Upper lobe of right lung (tissue), 1 donor: ENCODE measurements at regions of chr7 and their contacts with region 1.

Region 1: DNA sequence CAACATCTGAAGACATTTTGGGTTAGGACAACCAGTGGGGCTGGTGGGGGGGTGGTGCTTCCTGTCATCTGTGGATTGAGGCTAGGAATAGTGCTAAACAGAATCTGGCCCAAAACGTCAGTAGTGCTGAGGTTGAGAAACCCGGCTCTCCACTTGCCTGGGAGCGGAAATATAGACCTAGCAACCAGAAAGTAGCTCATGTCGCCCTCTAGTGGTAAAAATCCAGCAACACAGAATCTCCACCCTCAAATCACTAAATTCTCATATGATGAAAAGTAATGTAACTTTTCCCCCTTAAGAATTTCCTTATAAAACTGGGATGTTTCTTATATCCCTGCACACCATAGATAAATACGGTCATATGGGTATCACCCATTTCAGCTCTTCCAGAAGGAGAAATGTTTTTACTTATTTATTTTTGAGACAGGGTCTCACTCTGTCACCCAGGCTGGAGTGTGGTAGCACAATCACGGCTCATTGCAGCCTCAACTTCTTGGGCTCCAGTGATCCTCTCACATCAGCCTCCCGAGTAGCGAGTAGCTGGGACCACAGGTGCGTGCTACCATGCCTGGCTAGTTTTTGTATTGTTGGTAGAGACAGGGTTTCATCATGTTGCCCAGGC is 34.4 kb downstream of the ZC3HAV1 start:
- DNase-seq: peak; percentile 67
- ATAC-seq: peak; percentile 94
- H3K4me3 ChIP-seq: no peak overlapping the region
- H3K27ac ChIP-seq: peak overlapping the region; percentile 20
- H3K4me1 ChIP-seq: peaks cover 11% of the 10 kb centered on the region
- H3K27me3 ChIP-seq: no peaks in the 10 kb centered on the region
- CTCF ChIP-seq: peak; percentile 87

Region 2: DNA sequence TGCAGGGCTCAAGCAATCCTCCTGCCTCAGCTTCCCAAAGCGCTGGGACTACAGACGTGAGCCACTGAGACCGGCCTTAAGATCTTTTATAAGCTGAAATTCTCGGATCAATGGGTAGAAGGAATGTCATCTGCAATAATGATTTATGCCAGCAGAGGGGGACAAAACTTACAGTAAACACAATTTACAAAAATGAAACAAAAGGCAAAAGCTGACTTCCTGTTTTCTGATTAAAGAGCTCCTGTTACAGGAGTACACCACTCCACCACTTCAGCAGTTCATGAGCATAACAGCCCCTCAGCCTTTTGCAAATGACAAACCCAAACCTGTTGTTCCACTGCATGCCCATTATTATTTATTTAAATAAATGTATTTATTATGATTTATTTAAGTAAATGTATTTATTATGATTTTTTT is 188.6 kb before region 1 on chr7:
- intact Hi-C with region 1: loop called (anchors 10 kb)
- DNase-seq: no peak
- ATAC-seq: peak; percentile 85
- H3K4me3 ChIP-seq: no peak overlapping the region
- H3K27ac ChIP-seq: no peak overlapping the region
- H3K4me1 ChIP-seq: peaks cover 5% of the 10 kb centered on the region
- H3K27me3 ChIP-seq: no peaks in the 10 kb centered on the region
- CTCF ChIP-seq: peak; percentile 68

Region 3: GRCh38 chr7:139023076-139023475 is 52.1 kb before region 1 on chr7:
- intact Hi-C with region 1: loop called (anchors 10 kb)
- DNase-seq: no peak
- ATAC-seq: no peak
- H3K4me3 ChIP-seq: no peak overlapping the region
- H3K27ac ChIP-seq: no peak overlapping the region
- H3K4me1 ChIP-seq: no peaks in the 10 kb centered on the region
- H3K27me3 ChIP-seq: no peaks in the 10 kb centered on the region
- CTCF ChIP-seq: no peak

Region 4: DNA sequence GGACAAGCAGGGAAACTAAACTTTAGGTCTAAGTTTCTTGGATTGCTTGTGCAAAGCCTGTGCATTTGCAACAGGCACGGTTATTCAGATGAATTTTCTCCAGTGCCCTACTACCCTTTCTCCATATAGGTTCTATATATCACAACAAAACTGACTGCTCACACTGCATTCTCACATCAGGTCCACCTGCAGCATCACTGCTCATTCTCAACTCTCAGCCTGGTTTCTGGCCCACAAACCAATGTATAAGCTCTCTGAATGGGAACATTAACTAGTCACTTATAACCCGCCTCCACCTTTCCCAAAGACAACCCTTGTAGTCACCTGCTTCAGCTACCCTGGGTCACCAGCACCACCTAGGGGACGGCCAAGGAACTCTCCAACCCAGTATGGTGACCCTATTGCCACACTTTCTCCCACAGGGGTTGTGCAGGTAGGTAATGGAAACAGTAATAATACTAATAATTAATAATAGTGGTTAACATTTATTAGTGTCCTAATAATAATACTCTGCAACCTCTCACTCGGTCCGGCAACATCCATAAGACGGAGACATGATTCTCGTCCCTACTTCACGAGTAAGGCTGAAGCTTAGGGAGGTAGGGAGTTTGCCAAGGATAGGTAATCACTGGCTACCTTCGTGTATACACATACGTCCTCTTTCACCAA is 545.7 kb after region 1 on chr7:
- intact Hi-C with region 1: no loop called
- DNase-seq: peak; percentile 72
- ATAC-seq: peak; percentile 85
- H3K4me3 ChIP-seq: no peak overlapping the region
- H3K27ac ChIP-seq: no peak overlapping the region
- H3K4me1 ChIP-seq: peaks cover 4% of the 10 kb centered on the region
- H3K27me3 ChIP-seq: no peaks in the 10 kb centered on the region
- CTCF ChIP-seq: peak; percentile 64